ENCODE measurements at regions of chr3 and their contacts with region 1.

Region 1: GRCh38 chr3:71681224-71681668 is 44.0 kb downstream of the EIF4E3 start:
- DNase-seq: peak; percentile 80
- ATAC-seq: peak; percentile 74
- H3K4me3 ChIP-seq: peak overlapping the region; percentile 42; the same call in 1 of the 2 replicates
- H3K27ac ChIP-seq: peak overlapping the region; percentile 7; the same call in 1 of the 2 replicates
- H3K4me1 ChIP-seq: peaks cover 25% of the 10 kb centered on the region
- H3K27me3 ChIP-seq: no peaks in the 10 kb centered on the region
- CTCF ChIP-seq: peak; percentile 96

Region 2: DNA sequence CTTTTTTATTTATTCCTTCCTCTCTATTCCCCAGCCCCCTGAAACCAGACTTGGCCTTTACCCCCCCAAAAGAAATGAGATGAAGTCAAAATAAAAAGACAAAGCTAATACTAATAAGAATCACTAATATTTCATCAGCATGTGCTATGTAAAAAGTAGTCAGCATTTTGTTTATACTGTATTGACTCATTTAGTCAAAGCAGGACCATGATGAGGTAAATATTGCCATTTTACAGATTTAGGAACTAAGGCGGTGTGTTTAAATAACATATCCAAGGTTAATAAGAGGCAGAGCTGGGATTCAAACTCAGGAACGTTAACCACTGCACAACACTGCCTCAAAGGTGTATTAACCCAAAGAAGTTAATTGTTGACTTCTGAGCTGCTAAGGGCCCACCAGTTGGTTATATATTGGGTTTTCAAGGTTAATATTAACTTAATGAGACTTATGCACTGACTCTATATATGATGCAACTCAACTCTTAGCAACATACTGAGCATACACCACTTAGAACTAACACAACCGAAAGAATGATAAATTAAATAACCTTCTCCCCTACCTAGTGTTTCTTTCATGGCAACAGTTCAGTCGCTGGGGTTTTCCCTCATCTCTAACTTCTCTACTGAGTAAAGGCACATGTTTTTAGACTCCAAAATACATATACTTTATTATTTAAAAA is 132.4 kb before region 1 on chr3:
- CTCF ChIA-PET with region 1: no interaction called
- POLR2A ChIA-PET with region 1: no interaction called
- intact Hi-C with region 1: no loop called
- DNase-seq: no peak
- ATAC-seq: no peak
- H3K4me3 ChIP-seq: no peak overlapping the region
- H3K27ac ChIP-seq: no peak overlapping the region
- H3K4me1 ChIP-seq: peaks cover 12% of the 10 kb centered on the region
- H3K27me3 ChIP-seq: no peaks in the 10 kb centered on the region
- CTCF ChIP-seq: no peak

Region 3: DNA sequence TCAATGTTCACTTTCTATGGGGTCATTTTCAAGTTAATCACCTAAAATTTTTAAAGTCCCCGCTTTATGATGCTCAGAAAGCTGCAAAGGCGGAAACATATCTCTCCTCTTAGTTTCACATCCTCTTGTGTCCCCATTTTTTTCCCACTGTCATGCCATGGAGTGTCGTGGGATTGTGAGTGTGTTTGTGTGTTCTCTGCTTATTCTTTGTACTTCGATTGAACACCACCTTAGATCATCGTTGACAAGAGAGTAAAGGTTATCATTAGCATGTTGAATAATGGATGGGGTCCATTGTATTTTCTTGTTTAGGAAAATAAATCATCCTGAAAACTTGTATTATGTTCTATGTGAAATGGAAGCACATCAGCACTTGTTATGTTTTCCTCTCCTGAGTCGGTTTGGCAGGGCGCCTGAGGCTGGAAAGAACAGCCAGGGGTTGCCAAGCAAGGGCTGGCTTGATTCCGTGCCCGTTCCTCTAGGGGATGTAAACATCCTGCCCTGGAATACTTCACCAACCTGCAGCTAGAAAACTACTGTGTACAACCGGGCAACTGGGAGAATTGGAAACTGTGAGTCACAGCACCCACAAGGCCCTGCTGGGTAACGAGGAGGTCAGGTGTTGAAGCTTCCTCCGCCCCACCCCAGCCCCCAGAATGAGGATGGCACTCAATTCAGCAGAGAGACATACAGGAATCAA is 23.3 kb before region 1 on chr3:
- CTCF ChIA-PET with region 1: interaction called, 10 read pairs
- POLR2A ChIA-PET with region 1: no interaction called
- intact Hi-C with region 1: loop called (anchors 1 kb)
- DNase-seq: peak; percentile 97
- ATAC-seq: peak; percentile 99
- H3K4me3 ChIP-seq: peak overlapping the region; percentile 39; the same call in 1 of the 2 replicates
- H3K27ac ChIP-seq: peak overlapping the region; percentile 25
- H3K4me1 ChIP-seq: peaks cover 12% of the 10 kb centered on the region
- H3K27me3 ChIP-seq: no peaks in the 10 kb centered on the region
- CTCF ChIP-seq: no peak

Measured in PC-3 (cell line).